Activated CD4-positive, alpha-beta memory T cell treated with anti-CD3 and anti-CD28 coated beads for 36 hours (primary cell): ENCODE measurements at regions of chr12 and their contacts with region 1.

Region 1: GRCh38 chr12:47207340-47207717 is 127.6 kb upstream of the AMIGO2 start:
- DNase-seq: peak; percentile 75
- H3K4me3 Mint-ChIP-seq: peak overlapping the region; percentile 85
- H3K27ac Mint-ChIP-seq: peak overlapping the region; percentile 96
- H3K4me1 Mint-ChIP-seq: peaks cover 80% of the 10 kb centered on the region
- H3K27me3 Mint-ChIP-seq: no peaks in the 10 kb centered on the region

Region 2: DNA sequence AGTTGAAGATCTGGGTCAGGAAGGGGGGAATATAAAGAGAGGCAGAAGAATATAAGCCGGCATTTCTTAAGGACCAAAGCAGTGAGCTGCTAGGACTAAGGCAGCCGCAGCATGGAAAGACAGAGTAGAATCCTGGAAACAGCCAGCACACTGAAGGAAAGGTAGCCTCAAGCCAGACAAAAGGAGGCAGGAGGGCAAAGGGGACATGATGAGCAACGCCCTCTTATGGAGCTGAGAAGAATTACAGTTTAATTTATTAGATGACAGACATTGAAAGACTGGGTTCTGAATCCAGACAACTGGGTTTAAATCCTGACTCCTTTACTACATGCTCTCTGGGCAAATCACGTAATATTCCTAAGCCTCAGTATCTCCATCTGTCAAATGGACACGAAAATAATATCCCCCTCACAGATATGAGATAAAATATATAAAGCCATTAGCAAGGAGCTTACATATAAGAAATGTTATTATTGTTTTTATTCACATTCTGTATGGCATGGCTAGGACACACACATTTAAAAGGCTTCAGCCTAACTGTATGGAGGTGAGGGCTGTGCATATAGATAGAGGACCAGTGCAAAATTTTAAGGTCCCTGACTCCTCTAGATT is 136.0 kb before region 1 on chr12:
- CTCF ChIA-PET with region 1: interaction called, 15 read pairs
- POLR2A ChIA-PET with region 1: no interaction called
- intact Hi-C with region 1: no loop called
- DNase-seq: no peak
- H3K4me3 Mint-ChIP-seq: no peak overlapping the region
- H3K27ac Mint-ChIP-seq: no peak overlapping the region
- H3K4me1 Mint-ChIP-seq: peaks cover 21% of the 10 kb centered on the region
- H3K27me3 Mint-ChIP-seq: no peaks in the 10 kb centered on the region

Region 3: DNA sequence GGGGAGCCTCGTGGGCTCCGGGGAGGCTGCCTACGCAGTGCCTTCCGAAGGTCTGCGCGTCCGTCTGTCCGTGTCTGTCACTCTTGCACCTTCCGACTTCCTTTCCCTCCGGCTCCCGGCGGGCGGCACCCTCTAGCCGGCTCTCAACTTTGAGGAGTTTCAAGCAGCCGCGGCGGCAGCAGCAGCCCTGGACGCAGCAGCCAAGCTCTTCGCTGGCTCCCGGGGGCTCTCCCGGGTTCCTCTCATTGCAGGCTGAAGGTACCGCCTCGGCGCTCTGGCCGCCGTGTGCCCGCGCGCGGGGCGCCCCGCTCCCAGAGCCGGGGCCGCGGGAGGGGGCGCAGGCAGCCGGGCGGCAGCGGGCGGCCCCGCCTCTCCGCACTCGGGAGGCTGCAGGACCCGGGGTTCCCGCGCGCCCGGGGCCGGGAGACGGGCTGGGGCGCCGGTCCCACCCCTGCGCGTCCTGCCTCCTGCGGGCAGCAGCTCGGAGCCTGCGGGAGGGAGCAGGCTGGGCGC is 127.8 kb before region 1 on chr12 and contains the starts of genes AMIGO2 and PCED1B:
- CTCF ChIA-PET with region 1: interaction called, 17 read pairs
- POLR2A ChIA-PET with region 1: interaction called, 92 read pairs
- intact Hi-C with region 1: loop called (anchors 1 kb)
- DNase-seq: peak; percentile 83
- H3K4me3 Mint-ChIP-seq: peak within 1 kb of the TSS; percentile 99
- H3K27ac Mint-ChIP-seq: peak within 1 kb of the TSS; percentile 92
- H3K4me1 Mint-ChIP-seq: peaks cover 72% of the 10 kb centered on the region
- H3K27me3 Mint-ChIP-seq: no peaks in the 10 kb centered on the region
- total RNA-seq, gene AMIGO2: 12.4 to 13.6 TPM
- total RNA-seq, gene PCED1B: 133 to 136 TPM

Region 4: DNA sequence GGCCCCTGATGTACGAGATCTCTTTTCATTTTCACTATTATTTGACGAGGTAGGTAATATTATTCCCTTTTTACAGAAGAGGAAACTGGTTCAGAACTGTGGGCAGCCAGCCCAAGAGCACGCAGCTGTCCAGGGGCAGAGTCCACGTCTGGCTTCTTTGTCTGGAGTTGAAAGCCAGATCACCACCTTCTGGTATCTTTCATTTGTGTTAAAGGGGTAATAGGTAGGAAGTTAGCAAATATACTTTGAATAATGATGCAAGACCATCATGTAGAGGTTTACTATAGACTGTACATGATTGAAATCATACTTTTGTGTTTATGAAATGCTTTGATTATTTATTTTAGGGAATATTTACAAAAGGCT is 16.5 kb after region 1 on chr12:
- CTCF ChIA-PET with region 1: interaction called, 3 read pairs
- POLR2A ChIA-PET with region 1: interaction called, 76 read pairs
- intact Hi-C with region 1: loop called (anchors 2 kb)
- DNase-seq: no peak
- H3K4me3 Mint-ChIP-seq: peak overlapping the region; percentile 70
- H3K27ac Mint-ChIP-seq: peak overlapping the region; percentile 87
- H3K4me1 Mint-ChIP-seq: peaks cover 68% of the 10 kb centered on the region
- H3K27me3 Mint-ChIP-seq: no peaks in the 10 kb centered on the region